ENCODE measurements at regions of chr10 and their contacts with region 1.

Region 1: DNA sequence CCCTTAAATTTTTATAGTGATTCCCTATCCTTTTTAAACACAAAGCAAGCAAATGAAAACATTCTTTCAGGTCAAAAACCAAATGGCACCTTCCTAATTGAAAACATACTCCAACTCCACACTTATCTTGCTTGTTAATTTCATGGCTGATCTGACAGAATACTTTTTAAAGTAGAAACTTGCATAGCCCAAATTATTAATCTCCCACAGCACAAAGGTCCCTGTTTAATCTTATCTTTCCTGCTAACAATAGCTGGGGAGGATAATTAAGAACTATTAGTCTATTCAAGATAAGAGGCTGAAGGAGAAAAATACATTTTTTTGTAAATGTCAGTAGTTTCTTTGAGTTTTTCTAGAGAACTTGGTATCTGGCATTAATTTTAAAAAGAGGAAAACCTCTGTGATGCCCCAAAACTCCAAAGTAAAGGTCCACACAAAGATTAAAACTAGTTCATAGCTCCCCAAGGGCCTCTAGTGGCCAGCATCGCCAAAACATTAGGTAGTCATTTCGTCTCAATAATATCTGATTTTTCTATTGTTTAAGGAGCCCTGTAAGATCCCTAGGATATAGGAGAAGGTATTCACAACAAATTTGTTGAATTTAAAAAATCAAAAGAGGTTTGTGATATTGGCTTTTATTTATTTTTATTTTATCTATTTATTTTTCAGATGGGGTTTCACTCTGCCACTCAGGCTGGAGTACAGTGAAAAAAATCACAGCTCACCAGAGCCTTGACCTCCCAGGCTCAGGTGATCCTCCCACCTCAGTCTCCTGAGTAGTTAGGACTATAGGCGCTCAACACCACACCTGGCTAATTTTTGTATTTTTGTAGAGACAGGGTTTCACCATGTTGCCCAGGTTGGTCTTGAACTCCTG is 14.7 kb downstream of the CDNF start:
- DNase-seq: peak; percentile 66
- ATAC-seq: peak in 1 of 2 experiments; percentile 56; a peak in 3 of 6 replicates
- H3K4me3 ChIP-seq: no peak overlapping the region
- H3K27ac ChIP-seq: peak overlapping the region; percentile 94 to 96
- H3K4me1 ChIP-seq: peaks cover 52% of the 10 kb centered on the region
- CTCF ChIP-seq: peak; percentile 96
- EP300 ChIP-seq: no peak
- POLR2A ChIP-seq: no peak
- RAD21 ChIP-seq: peak; percentile 97 to 98

Region 2: DNA sequence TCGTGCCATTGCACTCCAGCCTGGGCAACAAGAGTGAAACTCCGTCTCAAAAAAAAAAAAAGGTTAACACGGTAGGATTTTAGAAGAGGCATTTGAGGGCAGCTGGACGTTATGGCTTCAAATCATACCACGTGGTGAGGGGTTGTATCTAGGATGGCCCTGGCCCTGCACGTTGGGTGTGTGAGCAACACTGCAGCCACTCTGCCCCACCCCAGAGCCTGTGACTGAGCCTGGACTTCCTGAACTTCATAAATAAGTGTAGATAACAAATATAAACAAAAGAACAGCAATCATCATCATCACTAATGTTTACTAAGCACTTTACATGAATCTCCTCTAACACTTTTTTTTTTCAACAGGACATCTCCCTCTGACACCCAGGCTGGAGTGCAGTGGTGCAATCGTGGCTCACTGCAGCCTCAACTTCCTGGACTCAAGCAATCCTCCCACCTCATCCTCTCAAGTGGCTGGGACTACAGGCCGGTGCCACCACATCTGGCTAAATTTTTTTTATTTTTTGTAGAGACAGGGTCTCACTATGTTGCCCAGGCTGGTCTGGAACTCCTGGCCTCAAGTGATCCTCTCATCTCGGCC is 322.8 kb before region 1 on chr10:
- CTCF ChIA-PET with region 1: interaction called, 45 read pairs
- POLR2A ChIA-PET with region 1: no interaction called
- DNase-seq: peak in 1 of 2 experiments; percentile 11
- ATAC-seq: no peak
- H3K4me3 ChIP-seq: no peak overlapping the region
- H3K27ac ChIP-seq: peak overlapping the region in 1 of 2 experiments; percentile 69; a peak in 1 of 6 replicates
- H3K4me1 ChIP-seq: peaks cover 6% of the 10 kb centered on the region
- CTCF ChIP-seq: no peak
- EP300 ChIP-seq: no peak
- POLR2A ChIP-seq: no peak
- RAD21 ChIP-seq: no peak

Region 3: GRCh38 chr10:14543046-14543903 is 279.8 kb before region 1 on chr10:
- CTCF ChIA-PET with region 1: interaction called, 16 read pairs
- POLR2A ChIA-PET with region 1: no interaction called
- DNase-seq: no peak
- ATAC-seq: no peak
- H3K4me3 ChIP-seq: no peak overlapping the region
- H3K27ac ChIP-seq: peak overlapping the region in 1 of 2 experiments; percentile 50; a peak in 4 of 6 replicates
- H3K4me1 ChIP-seq: peaks cover 41% of the 10 kb centered on the region
- CTCF ChIP-seq: no peak
- EP300 ChIP-seq: no peak
- POLR2A ChIP-seq: no peak
- RAD21 ChIP-seq: peak; percentile 21 to 39; a peak in 2 of 5 replicates

Region 4: GRCh38 chr10:14653271-14654228 is 169.6 kb before region 1 on chr10:
- CTCF ChIA-PET with region 1: interaction called, 7 read pairs
- POLR2A ChIA-PET with region 1: interaction called, 13 read pairs
- DNase-seq: peak; percentile 86 to 96
- ATAC-seq: peak; percentile 84 to 91
- H3K4me3 ChIP-seq: no peak overlapping the region
- H3K27ac ChIP-seq: peak overlapping the region; percentile 89 to 92
- H3K4me1 ChIP-seq: peaks cover 63% of the 10 kb centered on the region
- CTCF ChIP-seq: no peak
- EP300 ChIP-seq: peak; percentile 68 to 88; a peak in 3 of 5 replicates
- POLR2A ChIP-seq: no peak
- RAD21 ChIP-seq: peak; percentile 16 to 59; a peak in 1 of 5 replicates

Region 5: DNA sequence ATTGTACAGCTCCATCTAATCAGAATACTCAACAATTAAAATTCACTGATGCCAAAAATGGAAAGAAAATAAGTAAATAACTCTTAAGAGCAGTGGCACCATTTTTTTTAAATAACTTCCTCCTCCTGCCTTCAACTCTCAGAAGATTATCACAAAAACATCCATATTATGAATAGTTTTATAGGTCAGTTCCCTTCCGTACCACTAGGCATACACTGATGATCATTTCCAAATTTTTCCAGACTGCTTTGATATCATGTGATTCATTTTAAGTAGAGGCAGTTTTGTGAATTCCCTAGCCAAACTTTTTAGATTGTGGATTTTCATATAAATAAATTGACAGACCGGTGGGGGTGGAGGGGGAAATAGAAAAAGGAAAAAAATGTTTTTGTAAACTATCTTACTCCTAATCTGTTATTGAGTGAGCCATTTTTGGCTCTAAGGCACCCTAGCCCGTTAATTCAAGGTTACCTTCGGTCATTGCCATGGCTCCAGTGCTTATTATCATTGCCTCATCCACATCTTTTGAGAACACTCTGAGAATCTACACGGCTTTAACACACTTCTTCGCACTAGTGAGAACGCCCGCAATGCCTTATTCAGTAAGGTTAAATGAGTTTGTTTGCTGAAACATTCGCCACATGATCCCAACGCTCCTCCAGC is 49.4 kb before region 1 on chr10:
- CTCF ChIA-PET with region 1: no interaction called
- POLR2A ChIA-PET with region 1: no interaction called
- DNase-seq: no peak
- ATAC-seq: 0 out of 6 replicates have a peak, but pooled peaks of 1 of the 2 experiments have one; percentile 37
- H3K4me3 ChIP-seq: no peak overlapping the region
- H3K27ac ChIP-seq: peak overlapping the region in 1 of 2 experiments; percentile 32; a peak in 1 of 6 replicates
- H3K4me1 ChIP-seq: peaks cover 6% of the 10 kb centered on the region
- CTCF ChIP-seq: no peak
- EP300 ChIP-seq: no peak
- POLR2A ChIP-seq: no peak
- RAD21 ChIP-seq: no peak

Region 6: GRCh38 chr10:14837757-14838581 is 14.9 kb after region 1 on chr10 and contains the starts of genes CDNF, HSPA14 and MSANTD7:
- CTCF ChIA-PET with region 1: interaction called, 47 read pairs
- POLR2A ChIA-PET with region 1: interaction called, 7 read pairs
- DNase-seq: peak; percentile 97 to 99
- ATAC-seq: peak; percentile 98
- H3K4me3 ChIP-seq: peak within 1 kb of the TSS; percentile 90
- H3K27ac ChIP-seq: peak within 1 kb of the TSS; percentile 86 to 94
- H3K4me1 ChIP-seq: peaks cover 8% of the 10 kb centered on the region; the same call in 1 of the 3 replicates
- CTCF ChIP-seq: no peak
- EP300 ChIP-seq: no peak
- POLR2A ChIP-seq: peak; percentile 86
- RAD21 ChIP-seq: no peak; a peak in 1 of 5 replicates
- polyA plus RNA-seq, gene CDNF: 1.8 and 2.0 TPM in 2 replicates
- polyA plus RNA-seq, gene HSPA14: 31.7 and 45.7 TPM in 2 replicates
- polyA plus RNA-seq, gene MSANTD7: 10.9 and 11.2 TPM in 2 replicates